ENCODE measurements at regions of chr15 and their contacts with region 1.

Region 1: DNA sequence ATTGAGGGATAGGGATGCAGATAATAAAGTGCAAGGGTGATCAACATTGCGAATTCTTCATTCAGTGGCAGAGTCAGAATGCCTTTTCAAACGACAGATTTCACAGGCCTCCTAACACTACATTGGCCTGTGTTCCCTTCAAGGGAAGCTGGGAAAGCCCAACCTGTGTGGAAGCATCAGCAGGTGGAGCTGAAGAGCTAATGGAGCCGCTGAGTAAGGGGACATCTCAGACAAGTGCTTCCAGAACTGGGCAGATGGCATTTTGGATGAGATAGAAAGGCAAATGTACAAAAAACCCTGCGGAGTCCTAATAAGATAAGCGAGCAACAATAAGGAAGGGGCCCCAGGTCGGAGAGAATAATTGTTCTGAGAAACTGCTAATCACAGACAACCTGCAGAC is 8.5 kb upstream of the SLC24A5 start:
- DNase-seq: peak; percentile 64
- ATAC-seq: peak; percentile 97
- H3K4me3 Mint-ChIP-seq: no peak overlapping the region
- H3K27ac Mint-ChIP-seq: no peak overlapping the region
- H3K4me1 Mint-ChIP-seq: peaks cover 12% of the 10 kb centered on the region
- H3K27me3 Mint-ChIP-seq: no peaks in the 10 kb centered on the region
- CTCF ChIP-seq: no peak

Region 2: GRCh38 chr15:48096813-48097212 is 15.4 kb before region 1 on chr15:
- CTCF ChIA-PET with region 1: no interaction called
- POLR2A ChIA-PET with region 1: no interaction called
- DNase-seq: no peak
- ATAC-seq: no peak
- H3K4me3 Mint-ChIP-seq: no peak overlapping the region
- H3K27ac Mint-ChIP-seq: no peak overlapping the region
- H3K4me1 Mint-ChIP-seq: no peaks in the 10 kb centered on the region
- H3K27me3 Mint-ChIP-seq: no peaks in the 10 kb centered on the region
- CTCF ChIP-seq: no peak

Region 3: GRCh38 chr15:48170981-48171380 is 58.7 kb after region 1 on chr15:
- CTCF ChIA-PET with region 1: no interaction called
- POLR2A ChIA-PET with region 1: no interaction called
- DNase-seq: no peak
- ATAC-seq: no peak
- H3K4me3 Mint-ChIP-seq: no peak overlapping the region
- H3K27ac Mint-ChIP-seq: no peak overlapping the region; the same call in 1 of the 2 replicates
- H3K4me1 Mint-ChIP-seq: peaks cover 54% of the 10 kb centered on the region
- H3K27me3 Mint-ChIP-seq: no peaks in the 10 kb centered on the region
- CTCF ChIP-seq: no peak

Region 4: GRCh38 chr15:48205981-48206380 is 93.7 kb after region 1 on chr15 and contains the start of gene SLC12A1:
- CTCF ChIA-PET with region 1: interaction called, 10 read pairs
- POLR2A ChIA-PET with region 1: no interaction called
- DNase-seq: no peak
- ATAC-seq: no peak
- H3K4me3 Mint-ChIP-seq: no peak within 1 kb of the TSS
- H3K27ac Mint-ChIP-seq: no peak within 1 kb of the TSS
- H3K4me1 Mint-ChIP-seq: peaks cover 15% of the 10 kb centered on the region
- H3K27me3 Mint-ChIP-seq: no peaks in the 10 kb centered on the region
- CTCF ChIP-seq: no peak
- total RNA-seq, gene SLC12A1: 0.15 to 0.39 TPM (median 0.39 TPM) in 3 replicates

Region 5: GRCh38 chr15:48285329-48286214 is 173.3 kb after region 1 on chr15:
- CTCF ChIA-PET with region 1: interaction called, 14 read pairs
- POLR2A ChIA-PET with region 1: no interaction called
- DNase-seq: peak; percentile 33
- ATAC-seq: peak; percentile 85
- H3K4me3 Mint-ChIP-seq: no peak overlapping the region
- H3K27ac Mint-ChIP-seq: no peak overlapping the region; the same call in 1 of the 2 replicates
- H3K4me1 Mint-ChIP-seq: peaks cover 56% of the 10 kb centered on the region
- H3K27me3 Mint-ChIP-seq: no peaks in the 10 kb centered on the region
- CTCF ChIP-seq: peak; percentile 56